Activated naive CD4-positive, alpha-beta T cell treated with anti-CD3 and anti-CD28 coated beads for 36 hours (primary cell): ENCODE measurements at regions of chr10 and their contacts with region 1.

Region 1: GRCh38 chr10:89414146-89414878 is at the start of gene IFIT5:
- DNase-seq: peak; percentile 64
- H3K4me3 Mint-ChIP-seq: peak within 1 kb of the TSS; percentile 85
- H3K27ac Mint-ChIP-seq: peak within 1 kb of the TSS; percentile 96
- H3K4me1 Mint-ChIP-seq: peaks cover 45% of the 10 kb centered on the region
- H3K27me3 Mint-ChIP-seq: no peaks in the 10 kb centered on the region
- total RNA-seq, gene IFIT5: 7.0 to 7.2 TPM

Region 2: DNA sequence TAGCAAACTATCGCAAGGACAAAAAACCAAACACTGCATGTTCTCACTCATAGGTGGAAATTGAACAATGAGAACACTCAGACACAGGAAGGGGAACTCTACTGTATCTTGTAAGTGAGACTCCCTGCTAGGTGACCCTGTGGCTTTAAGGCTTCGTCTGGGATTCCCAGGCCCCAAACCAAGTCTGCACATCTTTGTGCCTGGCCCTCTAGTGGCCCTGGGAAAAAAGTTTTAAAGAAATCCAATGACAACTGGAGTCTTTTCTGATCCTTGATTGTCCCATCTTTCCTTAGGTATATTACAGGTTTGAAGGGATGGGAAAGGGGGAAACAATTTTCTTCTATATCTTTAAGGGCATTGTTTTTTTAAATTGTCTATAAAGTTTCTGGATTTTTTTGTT is 622.4 kb before region 1 on chr10:
- CTCF ChIA-PET with region 1: no interaction called
- intact Hi-C with region 1: loop called (anchors 5 kb)
- DNase-seq: peak; percentile 25
- H3K4me3 Mint-ChIP-seq: no peak overlapping the region
- H3K27ac Mint-ChIP-seq: no peak overlapping the region
- H3K4me1 Mint-ChIP-seq: peaks cover 19% of the 10 kb centered on the region
- H3K27me3 Mint-ChIP-seq: peaks cover 4% of the 10 kb centered on the region

Region 3: DNA sequence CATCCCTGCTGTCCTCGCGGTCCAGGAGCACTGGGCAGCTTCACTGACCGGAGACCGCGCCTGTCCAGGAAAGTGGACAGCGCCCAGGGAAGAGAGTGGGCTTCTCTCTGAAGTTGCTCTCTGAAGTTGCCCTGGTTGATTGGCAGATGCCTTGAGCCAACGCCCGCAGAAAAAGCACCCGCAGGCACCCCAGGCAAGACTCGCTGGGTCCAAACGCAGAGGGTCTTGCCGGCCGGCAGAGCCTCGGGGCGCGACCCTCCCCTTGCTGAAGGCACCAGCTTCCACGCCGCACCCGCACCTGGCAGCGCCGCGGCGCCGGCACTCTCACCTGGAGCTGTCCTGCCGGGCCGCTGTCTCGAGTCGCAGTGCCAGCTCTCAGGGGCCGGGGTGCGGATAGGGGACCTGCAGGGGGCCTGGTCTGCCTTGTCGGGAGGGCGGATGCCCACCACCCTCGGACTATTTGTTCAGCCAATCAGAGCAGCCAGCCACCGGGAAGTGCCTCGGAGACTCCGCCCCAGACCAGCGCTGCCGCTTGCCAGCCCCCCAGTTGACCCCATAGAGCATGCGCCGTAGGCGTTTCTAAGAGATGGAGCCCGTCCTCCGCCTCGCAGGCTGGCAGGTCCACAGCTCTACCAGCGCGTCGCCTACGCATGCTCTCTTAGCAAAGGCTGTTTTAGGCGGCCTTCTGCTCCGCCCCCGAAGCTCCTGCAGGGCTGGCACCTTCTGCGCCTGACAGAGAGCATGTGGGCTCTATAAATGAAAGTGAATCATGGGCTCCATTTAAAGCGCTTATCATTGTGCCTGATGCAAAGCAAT is 162.7 kb before region 1 on chr10 and contains the start of gene LIPA:
- CTCF ChIA-PET with region 1: interaction called, 4 read pairs
- intact Hi-C with region 1: loop called (anchors 1 kb)
- DNase-seq: peak; percentile 95
- H3K4me3 Mint-ChIP-seq: peak within 1 kb of the TSS; percentile 84
- H3K27ac Mint-ChIP-seq: no peak within 1 kb of the TSS
- H3K4me1 Mint-ChIP-seq: peaks cover 38% of the 10 kb centered on the region
- H3K27me3 Mint-ChIP-seq: no peaks in the 10 kb centered on the region
- total RNA-seq, gene LIPA: 16.1 to 17.2 TPM

Region 4: GRCh38 chr10:89278034-89278535 is 136.2 kb before region 1 on chr10:
- CTCF ChIA-PET with region 1: no interaction called
- intact Hi-C with region 1: no loop called
- DNase-seq: no peak
- H3K4me3 Mint-ChIP-seq: no peak overlapping the region
- H3K27ac Mint-ChIP-seq: no peak overlapping the region
- H3K4me1 Mint-ChIP-seq: no peaks in the 10 kb centered on the region
- H3K27me3 Mint-ChIP-seq: no peaks in the 10 kb centered on the region

Region 5: GRCh38 chr10:89369156-89370105 is 44.9 kb before region 1 on chr10:
- CTCF ChIA-PET with region 1: interaction called, 6 read pairs
- intact Hi-C with region 1: loop called (anchors 2 kb)
- DNase-seq: peak; percentile 39
- H3K4me3 Mint-ChIP-seq: no peak overlapping the region
- H3K27ac Mint-ChIP-seq: no peak overlapping the region
- H3K4me1 Mint-ChIP-seq: peaks cover 18% of the 10 kb centered on the region
- H3K27me3 Mint-ChIP-seq: no peaks in the 10 kb centered on the region

Region 6: GRCh38 chr10:89494575-89494974 is 80.3 kb after region 1 on chr10:
- CTCF ChIA-PET with region 1: no interaction called
- intact Hi-C with region 1: no loop called
- DNase-seq: no peak
- H3K4me3 Mint-ChIP-seq: no peak overlapping the region
- H3K27ac Mint-ChIP-seq: no peak overlapping the region
- H3K4me1 Mint-ChIP-seq: no peaks in the 10 kb centered on the region
- H3K27me3 Mint-ChIP-seq: no peaks in the 10 kb centered on the region

Region 7: DNA sequence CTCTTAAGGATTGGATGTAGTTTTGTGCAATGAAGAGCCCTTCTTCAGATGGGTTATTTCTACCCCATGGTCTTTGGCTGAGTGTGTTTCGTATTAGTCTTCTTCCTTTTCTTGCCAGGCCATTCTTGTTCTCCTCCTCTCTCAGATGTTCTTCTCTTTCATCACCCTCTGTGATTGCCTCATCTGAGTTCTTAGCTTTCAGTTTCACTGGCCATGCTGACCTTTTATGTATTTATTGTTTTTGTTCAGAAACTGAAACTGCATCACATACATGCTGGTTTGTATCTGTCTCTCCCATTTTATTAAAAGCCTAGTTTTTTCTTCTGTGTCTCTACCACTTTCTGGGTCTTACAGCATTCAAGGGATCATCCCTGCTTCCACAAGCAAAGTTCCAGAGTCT is 1784.5 kb after region 1 on chr10:
- CTCF ChIA-PET with region 1: no interaction called
- intact Hi-C with region 1: loop called (anchors 10 kb)
- DNase-seq: peak; percentile 37
- H3K4me3 Mint-ChIP-seq: no peak overlapping the region
- H3K27ac Mint-ChIP-seq: peak overlapping the region; percentile 13
- H3K4me1 Mint-ChIP-seq: peaks cover 77% of the 10 kb centered on the region
- H3K27me3 Mint-ChIP-seq: no peaks in the 10 kb centered on the region